Activated CD8-positive, alpha-beta T cell treated with anti-CD3 and anti-CD28 coated beads for 36 hours (primary cell): ENCODE measurements at regions of chr1 and their contacts with region 1.

Region 1: GRCh38 chr1:19762175-19762779 is 37.4 kb downstream of the TMCO4 start:
- DNase-seq: peak; percentile 56
- ATAC-seq: no peak
- H3K4me3 Mint-ChIP-seq: no peak overlapping the region
- H3K27ac Mint-ChIP-seq: no peak overlapping the region
- H3K4me1 Mint-ChIP-seq: peaks cover 9% of the 10 kb centered on the region
- H3K27me3 Mint-ChIP-seq: no peaks in the 10 kb centered on the region
- CTCF ChIP-seq: peak; percentile 87

Region 2: DNA sequence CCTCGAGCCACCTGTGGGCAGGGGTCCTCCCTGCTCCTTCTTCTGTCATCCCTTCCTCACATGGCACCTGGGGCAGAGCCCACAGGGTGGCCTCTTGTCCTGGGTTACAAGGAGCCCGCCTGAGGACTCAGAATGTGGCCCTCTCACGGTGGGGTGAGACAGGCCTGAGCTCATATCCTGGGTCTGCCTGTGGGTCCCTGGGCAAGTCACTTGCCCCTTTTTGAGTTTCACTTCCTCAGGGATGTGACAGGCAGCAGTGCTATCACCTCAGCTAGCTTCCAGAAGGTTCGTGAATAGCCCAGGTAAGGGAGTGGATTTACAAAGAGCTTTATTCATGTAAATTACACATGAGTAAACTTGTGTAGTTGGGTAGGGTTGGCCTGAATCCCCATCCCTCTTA is 64.1 kb before region 1 on chr1:
- CTCF ChIA-PET with region 1: no interaction called
- POLR2A ChIA-PET with region 1: no interaction called
- intact Hi-C with region 1: no loop called
- DNase-seq: no peak
- ATAC-seq: no peak
- H3K4me3 Mint-ChIP-seq: no peak overlapping the region
- H3K27ac Mint-ChIP-seq: no peak overlapping the region
- H3K4me1 Mint-ChIP-seq: no peaks in the 10 kb centered on the region
- H3K27me3 Mint-ChIP-seq: no peaks in the 10 kb centered on the region
- CTCF ChIP-seq: no peak

Region 3: DNA sequence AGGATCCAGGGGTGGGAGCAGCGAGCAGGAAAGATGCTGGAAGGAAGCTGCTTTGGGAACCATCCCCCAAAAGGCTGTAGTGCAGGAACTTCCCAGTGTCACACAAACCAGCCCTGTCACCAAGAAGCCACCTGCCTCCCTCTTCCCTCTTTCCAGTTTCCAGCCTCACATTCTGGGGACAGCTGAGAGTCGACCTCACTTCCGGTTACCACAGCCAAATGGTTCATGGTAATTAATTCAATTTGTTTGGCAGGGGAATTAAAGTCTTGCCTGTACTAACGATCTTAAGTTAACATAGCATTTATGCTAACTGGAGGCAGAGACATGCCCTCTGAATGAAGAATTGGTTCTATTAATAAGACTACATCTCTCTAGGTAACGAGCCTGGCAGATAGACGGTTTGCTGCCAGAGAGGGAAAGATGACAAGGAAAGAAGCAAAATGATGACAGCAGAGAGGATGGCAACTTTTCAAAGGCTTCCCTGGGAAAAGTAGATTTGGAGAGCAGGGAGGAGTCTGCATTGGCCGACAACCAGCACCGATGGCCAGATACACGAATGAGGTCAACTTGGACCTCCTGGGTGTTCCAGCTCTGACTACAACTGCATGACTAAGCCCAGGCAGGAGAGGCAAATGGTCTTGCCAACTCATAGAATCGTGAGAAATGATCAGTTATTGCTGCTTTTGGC is 26.7 kb before region 1 on chr1:
- CTCF ChIA-PET with region 1: no interaction called
- POLR2A ChIA-PET with region 1: no interaction called
- intact Hi-C with region 1: no loop called
- DNase-seq: no peak
- ATAC-seq: no peak
- H3K4me3 Mint-ChIP-seq: no peak overlapping the region
- H3K27ac Mint-ChIP-seq: no peak overlapping the region
- H3K4me1 Mint-ChIP-seq: no peaks in the 10 kb centered on the region
- H3K27me3 Mint-ChIP-seq: no peaks in the 10 kb centered on the region
- CTCF ChIP-seq: no peak

Region 4: GRCh38 chr1:19811206-19811851 is 49.1 kb after region 1 on chr1:
- CTCF ChIA-PET with region 1: interaction called, 7 read pairs
- POLR2A ChIA-PET with region 1: no interaction called
- intact Hi-C with region 1: loop called (anchors 5 kb)
- DNase-seq: peak; percentile 68
- ATAC-seq: peak; percentile 71
- H3K4me3 Mint-ChIP-seq: no peak overlapping the region
- H3K27ac Mint-ChIP-seq: no peak overlapping the region
- H3K4me1 Mint-ChIP-seq: no peaks in the 10 kb centered on the region
- H3K27me3 Mint-ChIP-seq: no peaks in the 10 kb centered on the region
- CTCF ChIP-seq: peak; percentile 74